GM12878 (cell line): ENCODE measurements at regions of chr2 and their contacts with region 1.

Region 1: GRCh38 chr2:7725171-7725849 is 808.1 kb downstream of the RNF144A start:
- DNase-seq: peak; percentile 73
- ATAC-seq: peak; percentile 51
- H3K4me3 ChIP-seq: no peak overlapping the region
- H3K27ac ChIP-seq: no peak overlapping the region; the same call in 1 of the 2 replicates
- H3K4me1 ChIP-seq: peaks cover 4% of the 10 kb centered on the region; the same call in 1 of the 2 replicates
- H3K27me3 ChIP-seq: no peaks in the 10 kb centered on the region; a peak in 1 of 4 replicates
- CTCF ChIP-seq: peak in 1 of 3 experiments; percentile 24; a peak in 1 of 6 replicates
- EP300 ChIP-seq: peak; percentile 63 to 68; a peak in 2 of 4 replicates
- POLR2A ChIP-seq: no peak
- RAD21 ChIP-seq: peak; percentile 27; the same call in 1 of the 2 replicates

Region 2: DNA sequence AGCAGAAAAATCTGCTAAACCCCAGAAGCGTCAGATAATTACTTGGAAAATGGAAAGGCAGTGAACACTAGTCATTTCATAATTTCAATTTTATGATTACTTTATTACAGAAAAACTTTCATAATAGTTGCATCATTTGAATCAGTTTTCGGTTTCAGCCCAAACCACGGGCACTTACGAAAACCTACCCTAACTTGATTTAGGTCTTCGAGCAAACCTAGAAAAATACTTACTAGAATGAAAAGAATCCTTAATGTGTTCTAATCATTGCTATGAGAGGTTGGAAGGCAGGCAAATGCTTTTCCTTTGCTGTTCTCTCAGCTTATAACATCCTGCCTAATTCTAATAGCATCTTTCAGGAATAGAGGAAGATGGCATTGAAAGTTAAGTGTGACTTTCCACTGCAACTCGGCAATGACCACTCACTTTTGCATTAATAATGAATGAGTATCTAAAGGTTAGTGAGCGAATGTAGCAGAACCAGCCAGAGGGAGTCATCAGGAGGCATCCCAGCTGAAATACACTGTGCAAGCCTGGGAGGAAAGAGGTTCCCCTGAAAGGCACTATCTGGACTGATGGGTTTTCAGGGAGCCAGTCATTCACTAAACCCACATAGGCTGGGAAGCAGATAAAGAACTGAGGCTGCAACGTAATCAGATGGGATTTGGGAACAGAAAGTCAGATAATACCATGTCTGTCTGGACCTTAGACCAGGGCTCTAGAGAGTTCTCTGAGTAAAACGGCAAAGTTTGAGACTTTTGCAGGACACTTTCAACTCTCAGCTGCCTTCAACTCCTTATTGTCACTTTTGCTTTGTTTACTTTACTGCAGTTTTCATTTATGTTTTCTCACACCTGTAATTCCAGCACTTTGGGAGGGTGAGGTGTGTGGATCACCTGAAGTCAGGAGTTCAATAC is 287.3 kb before region 1 on chr2:
- CTCF ChIA-PET with region 1: no interaction called
- POLR2A ChIA-PET with region 1: no interaction called
- RAD21 ChIA-PET with region 1: interaction called, 14 read pairs
- SMC1A ChIA-PET with region 1: interaction called, 17 read pairs
- in situ Hi-C with region 1: no loop called
- intact Hi-C with region 1: no loop called
- DNase-seq: peak; percentile 41
- ATAC-seq: peak; percentile 76
- H3K4me3 ChIP-seq: no peak overlapping the region
- H3K27ac ChIP-seq: peak overlapping the region; percentile 8; the same call in 1 of the 2 replicates
- H3K4me1 ChIP-seq: peaks cover 16% of the 10 kb centered on the region
- H3K27me3 ChIP-seq: no peaks in the 10 kb centered on the region; a peak in 1 of 4 replicates
- CTCF ChIP-seq: no peak
- EP300 ChIP-seq: peak; percentile 82 to 83; a peak in 2 of 4 replicates
- POLR2A ChIP-seq: no peak
- RAD21 ChIP-seq: no peak

Region 3: GRCh38 chr2:7609974-7610373 is 115.3 kb before region 1 on chr2:
- CTCF ChIA-PET with region 1: interaction called, 3 read pairs
- POLR2A ChIA-PET with region 1: no interaction called
- RAD21 ChIA-PET with region 1: no interaction called
- SMC1A ChIA-PET with region 1: interaction called, 4 read pairs
- in situ Hi-C with region 1: no loop called
- intact Hi-C with region 1: loop called (anchors 5 kb)
- DNase-seq: no peak
- ATAC-seq: peak; percentile 81
- H3K4me3 ChIP-seq: no peak overlapping the region
- H3K27ac ChIP-seq: no peak overlapping the region
- H3K4me1 ChIP-seq: peaks cover 17% of the 10 kb centered on the region
- H3K27me3 ChIP-seq: no peaks in the 10 kb centered on the region
- CTCF ChIP-seq: no peak
- EP300 ChIP-seq: no peak
- POLR2A ChIP-seq: no peak
- RAD21 ChIP-seq: no peak

Region 4: DNA sequence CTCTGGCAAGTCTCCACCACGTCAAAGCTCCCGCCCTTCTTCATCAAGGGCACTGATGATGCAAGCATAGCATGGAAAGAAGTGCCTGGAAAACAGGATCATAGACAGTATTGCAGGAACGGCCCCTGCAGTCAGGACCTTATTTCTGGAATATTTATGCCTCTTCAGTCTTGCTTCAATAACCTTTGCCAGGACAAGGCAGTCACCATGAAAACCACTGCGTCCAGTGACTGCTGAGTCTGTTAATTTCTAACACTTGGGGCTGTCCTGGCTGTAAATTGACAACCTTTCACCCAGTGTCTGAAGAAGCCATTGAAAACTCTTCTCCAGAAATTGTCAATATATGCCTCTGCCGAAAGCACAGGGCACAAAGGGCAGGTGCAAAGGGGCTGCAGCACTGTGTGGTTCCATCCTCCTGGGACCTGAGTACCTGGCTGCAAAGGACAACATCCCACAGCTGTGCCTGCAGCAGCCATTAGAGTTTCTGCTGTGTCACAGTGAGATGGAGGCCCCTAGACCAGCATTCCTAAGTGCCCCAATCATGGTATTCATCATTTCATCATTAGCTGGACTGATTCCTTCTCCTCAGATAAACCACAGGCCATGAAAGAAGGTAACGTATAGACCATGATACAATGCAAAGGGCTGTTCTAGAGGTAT is 11.5 kb after region 1 on chr2:
- CTCF ChIA-PET with region 1: interaction called, 8 read pairs
- POLR2A ChIA-PET with region 1: interaction called, 4 read pairs
- RAD21 ChIA-PET with region 1: interaction called, 9 read pairs
- SMC1A ChIA-PET with region 1: interaction called, 53 read pairs
- in situ Hi-C with region 1: no loop called
- intact Hi-C with region 1: no loop called
- DNase-seq: no peak
- ATAC-seq: peak; percentile 33
- H3K4me3 ChIP-seq: no peak overlapping the region
- H3K27ac ChIP-seq: no peak overlapping the region
- H3K4me1 ChIP-seq: no peaks in the 10 kb centered on the region
- H3K27me3 ChIP-seq: no peaks in the 10 kb centered on the region
- CTCF ChIP-seq: no peak
- EP300 ChIP-seq: no peak
- POLR2A ChIP-seq: no peak
- RAD21 ChIP-seq: no peak

Region 5: DNA sequence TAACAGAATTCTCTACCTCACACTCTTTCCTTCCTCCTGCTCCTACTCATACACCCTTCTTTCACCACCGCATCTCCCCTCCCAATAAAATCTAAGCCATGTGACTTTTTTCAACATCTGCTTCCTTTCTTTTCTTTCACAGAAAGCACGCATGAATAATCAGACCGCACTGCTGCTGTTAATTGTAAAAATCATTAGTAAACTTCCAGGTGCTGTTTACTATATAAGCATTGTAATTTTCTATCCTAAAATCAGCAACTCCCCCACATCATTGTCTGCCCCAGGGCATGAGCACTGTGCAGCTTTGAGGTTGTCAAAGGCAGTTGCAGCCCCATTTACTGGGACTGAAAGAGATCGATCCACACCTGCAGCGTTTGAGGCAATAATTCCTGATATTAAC is 173.9 kb after region 1 on chr2:
- CTCF ChIA-PET with region 1: no interaction called
- POLR2A ChIA-PET with region 1: no interaction called
- RAD21 ChIA-PET with region 1: no interaction called
- SMC1A ChIA-PET with region 1: no interaction called
- in situ Hi-C with region 1: no loop called
- intact Hi-C with region 1: loop called (anchors 5 kb)
- DNase-seq: no peak
- ATAC-seq: peak; percentile 58
- H3K4me3 ChIP-seq: no peak overlapping the region
- H3K27ac ChIP-seq: no peak overlapping the region
- H3K4me1 ChIP-seq: peaks cover 3% of the 10 kb centered on the region; the same call in 1 of the 2 replicates
- H3K27me3 ChIP-seq: no peaks in the 10 kb centered on the region
- CTCF ChIP-seq: no peak
- EP300 ChIP-seq: no peak
- POLR2A ChIP-seq: no peak
- RAD21 ChIP-seq: no peak

Region 6: DNA sequence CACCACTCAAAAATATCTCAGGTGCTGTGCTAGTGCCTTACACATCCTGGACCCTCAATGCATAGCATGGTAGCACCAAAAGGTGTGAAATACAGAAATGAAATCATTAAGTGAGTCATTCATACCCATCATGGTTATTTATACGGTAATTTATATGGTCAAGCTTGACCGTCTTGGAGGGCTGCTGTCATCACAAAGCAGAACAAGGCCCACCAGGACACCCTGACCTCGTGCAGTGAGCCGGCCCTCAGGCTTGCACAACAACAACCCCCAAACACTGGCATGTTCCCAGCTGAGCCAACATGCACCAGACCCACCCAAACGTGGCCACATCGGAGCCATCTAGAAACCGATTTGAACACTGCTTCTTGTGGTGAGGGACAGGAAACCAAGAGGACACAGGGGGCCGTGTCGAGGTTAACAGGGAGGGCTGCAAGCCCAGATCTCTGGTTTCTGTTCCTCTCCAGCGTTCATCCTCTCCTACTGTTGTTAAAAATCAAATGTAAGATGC is 578.1 kb after region 1 on chr2:
- CTCF ChIA-PET with region 1: interaction called, 3 read pairs
- POLR2A ChIA-PET with region 1: no interaction called
- RAD21 ChIA-PET with region 1: interaction called, 4 read pairs
- SMC1A ChIA-PET with region 1: interaction called, 7 read pairs
- in situ Hi-C with region 1: no loop called
- intact Hi-C with region 1: loop called (anchors 5 kb)
- DNase-seq: peak; percentile 95
- ATAC-seq: peak; percentile 77
- H3K4me3 ChIP-seq: no peak overlapping the region
- H3K27ac ChIP-seq: peak overlapping the region; percentile 81
- H3K4me1 ChIP-seq: peaks cover 74% of the 10 kb centered on the region
- H3K27me3 ChIP-seq: no peaks in the 10 kb centered on the region
- CTCF ChIP-seq: peak in 1 of 3 experiments; percentile 4; a peak in 1 of 6 replicates
- EP300 ChIP-seq: peak; percentile 92 to 94
- POLR2A ChIP-seq: peak; percentile 27; the same call in 1 of the 2 replicates
- RAD21 ChIP-seq: peak; percentile 35; the same call in 1 of the 2 replicates

Region 7: DNA sequence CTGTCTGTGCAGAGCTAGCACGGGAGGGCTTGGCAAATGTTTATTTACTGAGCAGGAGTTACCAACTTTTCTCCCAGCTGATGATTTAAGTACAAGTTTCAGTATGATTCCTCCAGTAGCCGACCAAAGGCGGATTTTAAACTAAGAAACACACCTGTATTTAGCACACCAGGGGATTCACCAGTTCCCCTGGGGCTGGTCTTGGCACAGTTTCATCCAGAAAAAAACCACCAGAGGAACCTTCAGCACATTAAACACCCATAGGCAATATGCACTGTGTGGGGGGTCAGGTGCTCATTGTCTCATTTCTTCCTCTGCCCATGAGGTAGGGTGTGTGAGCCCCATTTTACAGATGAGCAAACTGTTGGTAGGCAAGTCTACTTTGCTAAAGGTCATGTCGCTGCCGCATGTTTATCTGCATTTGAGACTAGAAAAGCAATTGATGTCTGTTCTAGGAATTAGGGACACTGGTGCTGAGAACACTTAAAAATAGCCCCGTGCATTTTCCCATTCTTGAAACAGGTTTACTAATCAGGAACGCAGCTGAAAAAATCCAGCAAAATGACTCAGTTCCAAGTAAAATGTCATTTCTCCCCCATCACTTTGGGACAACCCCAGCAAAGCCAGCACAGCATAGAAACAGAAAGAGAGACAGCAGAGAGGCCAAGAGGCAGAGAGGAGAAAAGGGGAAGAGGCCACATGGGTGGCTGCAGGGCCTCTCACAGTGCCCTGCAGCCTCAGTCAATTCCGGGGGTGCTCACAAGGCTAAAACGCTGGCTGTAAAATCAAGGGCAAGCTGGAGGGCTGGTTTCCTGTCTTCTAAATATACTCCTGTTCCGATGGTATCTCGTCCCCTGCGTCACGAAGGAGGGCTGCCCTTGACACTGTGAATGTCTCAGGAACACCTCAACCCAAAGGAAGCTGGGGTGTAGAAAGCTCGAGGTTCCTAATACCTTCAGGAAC is 789.8 kb after region 1 on chr2:
- CTCF ChIA-PET with region 1: no interaction called
- POLR2A ChIA-PET with region 1: interaction called, 3 read pairs
- RAD21 ChIA-PET with region 1: interaction called, 3 read pairs
- SMC1A ChIA-PET with region 1: interaction called, 4 read pairs
- in situ Hi-C with region 1: no loop called
- intact Hi-C with region 1: loop called (anchors 10 kb)
- DNase-seq: peak; percentile 99
- ATAC-seq: peak; percentile 82
- H3K4me3 ChIP-seq: peak overlapping the region; percentile 51; the same call in 1 of the 2 replicates
- H3K27ac ChIP-seq: peak overlapping the region; percentile 93
- H3K4me1 ChIP-seq: peaks cover 46% of the 10 kb centered on the region
- H3K27me3 ChIP-seq: no peaks in the 10 kb centered on the region
- CTCF ChIP-seq: no peak
- EP300 ChIP-seq: peak; percentile 76 to 95; a peak in 3 of 4 replicates
- POLR2A ChIP-seq: no peak
- RAD21 ChIP-seq: peak; percentile 36; the same call in 1 of the 2 replicates